ENCODE measurements at regions of chr19 and their contacts with region 1.

Region 1: DNA sequence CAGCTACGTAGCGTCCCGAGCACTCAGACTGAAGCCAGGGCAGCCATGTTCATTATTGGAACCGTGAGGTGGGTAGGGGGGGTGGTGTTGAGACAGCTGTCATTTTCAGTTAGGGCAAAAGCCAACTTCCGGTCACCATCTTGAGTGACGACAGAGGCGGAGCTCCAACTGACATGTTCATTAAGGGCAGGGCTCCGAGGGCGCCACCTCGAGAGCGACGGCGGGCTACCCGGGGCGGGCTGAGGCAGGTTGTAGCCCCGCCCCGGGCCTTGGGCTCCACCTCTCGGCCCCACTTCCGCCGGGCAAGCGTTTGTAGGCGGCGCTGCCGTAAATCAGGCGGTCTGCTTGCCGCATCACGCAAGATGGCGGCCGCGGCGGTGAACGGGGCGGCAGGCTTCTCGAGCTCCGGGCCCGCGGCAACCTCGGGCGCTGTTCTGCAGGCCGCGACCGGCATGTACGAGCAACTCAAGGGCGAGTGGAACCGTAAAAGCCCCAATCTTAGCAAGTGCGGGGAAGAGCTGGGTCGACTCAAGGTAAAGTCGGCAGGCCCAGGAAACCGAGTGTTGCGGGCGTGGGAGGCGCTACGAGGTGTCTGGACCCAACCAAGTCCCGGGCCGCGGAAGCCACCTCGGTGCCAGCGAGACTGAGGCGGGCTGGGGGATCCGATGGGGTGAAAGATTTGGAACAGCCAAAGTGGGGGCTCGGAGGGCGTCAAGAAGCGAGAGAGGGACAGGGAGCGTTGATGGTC is at the start of gene PSMD8:
- DNase-seq: peak; percentile 98
- H3K4me3 Mint-ChIP-seq: peak within 1 kb of the TSS; percentile 100
- H3K27ac Mint-ChIP-seq: peak within 1 kb of the TSS; percentile 98
- H3K4me1 Mint-ChIP-seq: peaks cover 23% of the 10 kb centered on the region
- H3K27me3 Mint-ChIP-seq: no peaks in the 10 kb centered on the region
- total RNA-seq, gene PSMD8: 286 and 299 TPM in 2 replicates

Region 2: GRCh38 chr19:37906869-37907734 is 467.5 kb before region 1 on chr19 and contains the start of gene SIPA1L3:
- intact Hi-C with region 1: loop called (anchors 10 kb)
- DNase-seq: peak; percentile 92
- H3K4me3 Mint-ChIP-seq: peak within 1 kb of the TSS; percentile 83
- H3K27ac Mint-ChIP-seq: peak within 1 kb of the TSS; percentile 60
- H3K4me1 Mint-ChIP-seq: peaks cover 17% of the 10 kb centered on the region
- H3K27me3 Mint-ChIP-seq: peaks cover 4% of the 10 kb centered on the region
- total RNA-seq, gene SIPA1L3: 15.6 and 15.9 TPM in 2 replicates

Region 3: DNA sequence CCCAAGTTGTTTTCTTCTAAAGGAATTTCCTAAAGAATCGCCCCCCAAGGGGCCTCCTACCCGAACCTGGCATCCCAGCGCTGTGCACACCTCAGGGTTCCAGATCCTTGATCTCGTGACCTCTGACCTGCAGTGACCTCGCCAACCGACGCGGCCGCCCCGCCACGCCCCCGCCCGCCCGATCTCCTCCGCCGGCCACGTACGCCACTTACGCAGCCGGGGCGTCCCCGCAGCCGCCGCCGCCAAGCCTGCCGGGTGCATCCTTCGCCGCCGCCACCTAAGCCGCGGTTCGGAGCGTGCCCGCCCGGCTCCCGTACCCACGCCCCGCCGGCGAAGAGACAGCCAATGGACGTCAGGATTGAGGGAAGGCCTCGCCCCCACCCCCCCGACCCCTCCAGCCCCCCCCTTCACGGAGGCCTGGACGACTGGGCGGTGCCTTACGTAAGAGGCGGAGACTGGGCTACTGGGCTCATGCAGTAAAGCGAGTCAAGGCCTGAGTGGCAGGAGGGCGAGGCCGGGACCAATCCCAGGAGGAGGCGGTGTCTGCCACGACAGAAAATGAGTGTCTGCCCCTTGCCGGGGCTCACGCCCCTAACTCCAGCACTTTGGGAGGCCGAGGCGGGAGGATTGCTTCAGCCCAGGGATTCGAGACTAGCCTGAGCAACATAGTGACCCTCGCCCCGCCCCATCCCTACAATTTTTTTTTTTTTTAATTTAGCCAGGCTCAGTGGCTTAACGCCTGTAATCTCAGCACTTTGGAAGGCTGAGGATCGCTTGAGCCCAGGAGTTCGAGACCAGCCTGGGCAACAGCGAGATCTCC is 58.7 kb before region 1 on chr19 and contains the start of gene YIF1B:
- intact Hi-C with region 1: loop called (anchors 1 kb)
- DNase-seq: peak; percentile 94
- H3K4me3 Mint-ChIP-seq: peak within 1 kb of the TSS; percentile 93
- H3K27ac Mint-ChIP-seq: peak within 1 kb of the TSS; percentile 90
- H3K4me1 Mint-ChIP-seq: peaks cover 41% of the 10 kb centered on the region
- H3K27me3 Mint-ChIP-seq: no peaks in the 10 kb centered on the region
- total RNA-seq, gene YIF1B: 106 and 114 TPM in 2 replicates

Region 4: DNA sequence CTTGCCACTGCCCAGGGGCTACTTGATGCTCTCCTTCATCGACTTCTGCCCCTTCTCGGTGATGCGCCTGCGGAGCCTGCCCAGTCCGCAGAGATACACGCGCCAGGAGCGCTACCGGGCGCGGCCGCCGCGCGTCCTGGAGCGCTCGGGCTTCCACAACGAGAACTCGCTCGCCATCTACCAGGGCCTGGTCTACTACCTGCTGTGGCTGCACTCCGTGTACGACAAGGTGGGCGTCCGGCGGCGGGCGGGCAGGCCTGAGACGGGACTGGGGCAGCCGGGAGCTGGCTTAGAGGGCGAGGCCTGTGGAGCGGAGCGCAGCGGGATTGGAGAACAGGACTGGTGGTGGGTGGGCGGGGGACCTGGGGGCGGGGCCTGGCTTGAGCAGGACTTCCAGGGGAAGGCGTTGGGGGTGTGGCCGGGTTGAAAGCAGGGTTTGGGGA is 12.9 kb before region 1 on chr19:
- intact Hi-C with region 1: loop called (anchors 1 kb)
- DNase-seq: peak; percentile 77
- H3K4me3 Mint-ChIP-seq: peak overlapping the region; percentile 88
- H3K27ac Mint-ChIP-seq: peak overlapping the region; percentile 81
- H3K4me1 Mint-ChIP-seq: peaks cover 11% of the 10 kb centered on the region
- H3K27me3 Mint-ChIP-seq: peaks cover 33% of the 10 kb centered on the region

Region 5: GRCh38 chr19:38496603-38497487 is 122.2 kb after region 1 on chr19:
- intact Hi-C with region 1: no loop called
- DNase-seq: no peak
- H3K4me3 Mint-ChIP-seq: no peak overlapping the region
- H3K27ac Mint-ChIP-seq: no peak overlapping the region
- H3K4me1 Mint-ChIP-seq: peaks cover 3% of the 10 kb centered on the region
- H3K27me3 Mint-ChIP-seq: peaks cover 3% of the 10 kb centered on the region

Region 6: GRCh38 chr19:38527466-38528136 is 153.0 kb after region 1 on chr19:
- intact Hi-C with region 1: no loop called
- DNase-seq: no peak
- H3K4me3 Mint-ChIP-seq: peak overlapping the region; percentile 44
- H3K27ac Mint-ChIP-seq: peak overlapping the region; percentile 9
- H3K4me1 Mint-ChIP-seq: peaks cover 6% of the 10 kb centered on the region
- H3K27me3 Mint-ChIP-seq: no peaks in the 10 kb centered on the region

Region 7: DNA sequence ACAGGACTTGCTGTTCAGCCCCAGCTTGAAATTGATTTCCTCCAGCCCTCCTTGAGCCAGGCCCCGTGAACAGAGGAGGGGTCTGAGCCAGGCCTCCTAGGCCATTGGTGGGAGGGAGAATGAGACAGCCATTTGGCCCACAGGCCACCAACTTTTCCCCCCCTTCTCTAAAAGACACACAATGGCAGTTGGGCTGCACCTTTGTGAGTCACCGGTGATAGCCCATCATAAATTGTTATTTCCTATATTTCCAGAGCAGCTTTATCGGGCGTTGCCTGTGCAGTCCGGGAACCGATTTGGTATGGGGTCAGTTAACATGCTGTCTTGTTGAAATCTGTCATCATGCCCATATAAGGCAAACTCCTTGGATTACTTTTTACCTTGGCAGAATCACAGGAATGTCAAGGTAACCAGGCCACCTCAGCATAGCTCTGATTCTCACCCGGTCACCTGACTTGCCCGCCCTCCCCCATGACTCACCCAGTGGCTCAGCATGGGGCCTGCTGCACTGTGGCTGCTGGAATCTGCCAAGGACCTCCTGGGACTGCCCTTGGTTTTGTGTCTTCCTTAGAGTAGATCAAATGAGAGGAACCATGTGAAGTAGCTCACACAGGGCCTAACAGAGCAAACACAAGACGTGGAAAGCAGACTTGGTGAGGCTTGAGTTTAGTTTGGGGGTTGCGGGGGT is 308.9 kb after region 1 on chr19:
- intact Hi-C with region 1: no loop called
- DNase-seq: no peak
- H3K4me3 Mint-ChIP-seq: no peak overlapping the region
- H3K27ac Mint-ChIP-seq: peak overlapping the region; percentile 79
- H3K4me1 Mint-ChIP-seq: peaks cover 84% of the 10 kb centered on the region
- H3K27me3 Mint-ChIP-seq: no peaks in the 10 kb centered on the region

Region 8: DNA sequence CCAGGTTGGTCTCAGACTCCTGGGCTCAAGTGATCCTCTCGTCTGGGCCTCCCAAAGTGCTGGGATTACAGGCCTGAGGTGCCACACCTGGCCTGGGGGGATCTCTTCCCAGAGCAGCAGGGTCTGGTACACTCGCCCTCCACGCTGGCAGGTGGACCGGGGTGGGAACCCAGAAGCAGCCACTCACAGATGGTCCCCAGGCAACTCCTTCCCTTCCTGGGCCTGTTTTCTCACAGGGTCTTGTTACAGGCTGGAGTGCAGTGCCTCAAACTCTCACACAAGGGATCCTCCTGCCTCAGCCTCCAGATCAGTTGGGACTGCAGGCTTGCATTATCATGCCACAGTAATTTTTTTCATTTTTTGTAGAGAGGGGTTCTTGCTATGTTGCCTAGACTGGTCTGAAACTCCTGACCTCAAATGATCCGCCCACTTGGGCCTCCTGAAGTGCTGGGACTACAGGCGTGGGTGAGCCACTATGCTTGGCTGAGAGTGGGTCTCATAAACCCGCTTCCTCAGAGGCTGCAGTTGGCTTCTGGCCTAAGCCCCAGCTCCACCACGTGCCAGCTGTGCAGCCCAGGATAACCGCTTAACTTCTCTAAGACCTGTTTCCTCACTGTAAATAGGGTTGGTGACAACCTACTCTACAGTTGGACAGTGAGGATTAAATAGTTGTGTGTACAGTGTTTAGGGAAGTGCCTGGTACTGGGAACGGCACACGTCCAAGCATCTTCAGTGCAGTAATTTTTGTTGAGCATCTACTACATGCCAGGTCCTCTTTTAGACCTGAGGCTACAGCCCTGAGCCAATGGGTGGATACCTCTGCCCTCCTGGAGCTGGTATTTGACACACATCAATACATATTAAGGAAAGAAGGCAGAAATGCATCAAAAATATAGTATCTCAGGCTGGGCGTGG is 538.3 kb after region 1 on chr19:
- intact Hi-C with region 1: no loop called
- DNase-seq: no peak
- H3K4me3 Mint-ChIP-seq: no peak overlapping the region
- H3K27ac Mint-ChIP-seq: peak overlapping the region; percentile 40
- H3K4me1 Mint-ChIP-seq: peaks cover 13% of the 10 kb centered on the region
- H3K27me3 Mint-ChIP-seq: no peaks in the 10 kb centered on the region

Region 9: DNA sequence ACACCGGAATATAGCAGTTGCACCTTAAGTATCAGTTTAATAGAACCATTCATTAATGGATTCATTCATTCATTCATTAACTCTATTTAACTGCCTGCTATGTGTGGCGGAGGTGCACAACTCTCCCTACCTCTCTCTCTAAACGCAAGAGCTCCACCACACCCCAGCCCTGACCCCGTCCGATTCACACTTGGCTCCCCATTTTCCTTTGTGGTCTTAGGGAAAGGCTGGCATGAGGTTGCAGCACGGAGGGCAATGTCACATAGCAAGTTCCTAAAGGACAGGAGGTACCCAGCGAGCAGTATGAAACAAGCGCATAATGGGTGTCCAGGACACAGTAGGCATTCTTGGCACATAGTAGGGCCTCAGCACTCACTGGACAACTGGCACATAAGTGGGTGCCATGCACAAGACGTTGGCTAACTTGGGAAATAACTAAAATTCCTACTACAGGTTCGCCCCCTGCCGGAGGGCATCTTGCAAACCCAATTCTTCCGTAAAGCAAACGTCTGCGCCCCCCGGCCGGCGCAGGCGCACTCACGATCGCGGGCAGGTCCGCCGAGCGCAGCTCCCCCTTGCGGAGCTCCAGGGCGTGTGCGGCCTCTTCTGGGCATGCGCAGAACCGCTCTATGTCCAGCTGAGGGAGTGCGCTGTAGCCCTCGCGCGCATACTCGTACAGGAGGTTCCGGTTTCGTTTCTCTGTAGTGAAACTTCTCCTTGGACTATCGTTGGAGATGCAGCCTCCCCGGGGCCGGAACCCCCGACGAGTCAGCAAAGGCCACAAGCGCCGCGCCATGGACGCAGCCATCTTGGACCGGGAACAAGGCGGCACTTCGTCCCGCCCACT is 555.5 kb after region 1 on chr19 and contains the start of gene SARS2:
- intact Hi-C with region 1: loop called (anchors 1 kb)
- DNase-seq: peak; percentile 92
- H3K4me3 Mint-ChIP-seq: peak within 1 kb of the TSS; percentile 94
- H3K27ac Mint-ChIP-seq: peak within 1 kb of the TSS; percentile 97
- H3K4me1 Mint-ChIP-seq: peaks cover 29% of the 10 kb centered on the region
- H3K27me3 Mint-ChIP-seq: no peaks in the 10 kb centered on the region
- total RNA-seq, gene SARS2: 41.1 and 45.2 TPM in 2 replicates

Measured in activated T-helper 2 cell treated with anti-CD3 and anti-CD28 coated beads, Interferon-gamma antibody, Interleukin-2, Interleukin-4, amounts not matched to agents 10 μg/mL and 5 μg/mL and 100 μg/mL, durations not matched to agents 14 hours and 24 hours and 36 hours (primary cell).